T-cell (primary cell): ENCODE measurements at regions of chr1 and their contacts with region 1.

Region 1: GRCh38 chr1:235122348-235122747 is 6.3 kb downstream of the TOMM20 start:
- DNase-seq: no peak
- ATAC-seq: no peak
- H3K4me3 ChIP-seq: no peak overlapping the region
- H3K4me3 Mint-ChIP-seq: peak overlapping the region in 2 of 3 donors; percentile 56 to 58
- H3K27ac ChIP-seq: no peak overlapping the region
- H3K27ac Mint-ChIP-seq: peak overlapping the region in 1 of 2 donors; percentile 73
- H3K4me1 ChIP-seq: peaks cover 6 to 31% of the 10 kb centered on the region in 2 experiments
- H3K4me1 Mint-ChIP-seq: peaks cover 55 to 62% (median 61%) of the 10 kb centered on the region in 3 donors
- H3K27me3 ChIP-seq: no peaks in the 10 kb centered on the region
- H3K27me3 Mint-ChIP-seq: no peaks in the 10 kb centered on the region

Region 2: DNA sequence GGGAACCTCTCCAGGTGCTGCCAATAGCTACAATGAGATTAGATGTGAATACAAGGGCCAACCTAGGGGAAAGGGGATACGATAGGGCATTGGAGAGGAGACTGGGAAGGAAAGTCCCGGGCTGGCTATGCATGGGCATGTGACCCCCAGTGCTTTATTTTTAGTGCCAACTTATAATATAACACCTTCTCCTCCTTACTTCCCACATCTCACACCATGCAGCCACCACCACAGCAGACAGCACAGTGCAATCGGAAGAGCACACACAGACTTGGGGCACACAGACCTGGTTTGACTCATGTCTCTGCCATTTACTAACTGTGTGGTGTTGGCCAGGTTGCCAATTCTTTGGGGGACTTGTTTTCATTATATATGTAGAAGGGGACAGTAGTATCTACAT is 79.1 kb before region 1 on chr1:
- CTCF ChIA-PET with region 1: no interaction called
- POLR2A ChIA-PET with region 1: no interaction called
- DNase-seq: peak in 3 of 35 experiments; percentile 5 to 30 (median 19)
- ATAC-seq: peak in 1 of 4 experiments; percentile 29
- H3K4me3 ChIP-seq: no peak overlapping the region
- H3K4me3 Mint-ChIP-seq: no peak overlapping the region
- H3K27ac ChIP-seq: no peak overlapping the region
- H3K27ac Mint-ChIP-seq: no peak overlapping the region
- H3K4me1 ChIP-seq: peaks cover 0 to 17% of the 10 kb centered on the region in 2 experiments
- H3K4me1 Mint-ChIP-seq: peaks cover 6 to 33% (median 17%) of the 10 kb centered on the region in 3 donors
- H3K27me3 ChIP-seq: no peaks in the 10 kb centered on the region
- H3K27me3 Mint-ChIP-seq: no peaks in the 10 kb centered on the region

Region 3: DNA sequence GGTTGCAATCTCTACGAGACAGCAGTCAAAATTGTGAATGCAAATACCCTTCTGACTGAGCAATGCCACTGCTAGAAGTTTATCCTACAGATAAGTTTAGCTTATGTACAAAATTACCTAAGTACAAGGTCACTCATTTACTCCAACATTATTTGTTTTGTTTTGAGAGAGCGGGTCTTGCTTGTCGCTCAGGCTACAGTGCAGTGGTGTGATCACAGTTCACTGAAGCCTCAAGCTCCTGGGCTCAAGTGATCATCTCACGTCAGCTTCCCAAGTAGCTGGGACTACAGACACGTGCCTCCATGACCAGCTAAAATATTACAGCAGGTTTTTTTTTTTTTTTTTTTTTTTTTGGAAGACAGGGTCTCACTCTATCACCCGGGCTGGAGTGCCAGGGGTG is 23.3 kb after region 1 on chr1:
- CTCF ChIA-PET with region 1: no interaction called
- POLR2A ChIA-PET with region 1: interaction called, 3 to 14 read pairs
- DNase-seq: no peak
- ATAC-seq: no peak
- H3K4me3 ChIP-seq: no peak overlapping the region
- H3K4me3 Mint-ChIP-seq: no peak overlapping the region
- H3K27ac ChIP-seq: no peak overlapping the region
- H3K27ac Mint-ChIP-seq: peak overlapping the region in 1 of 2 donors; percentile 28
- H3K4me1 ChIP-seq: peaks cover 0 to under 1% of the 10 kb centered on the region in 2 experiments
- H3K4me1 Mint-ChIP-seq: peaks cover 6 to 15% (median 11%) of the 10 kb centered on the region in 3 donors
- H3K27me3 ChIP-seq: no peaks in the 10 kb centered on the region
- H3K27me3 Mint-ChIP-seq: no peaks in the 10 kb centered on the region

Region 4: GRCh38 chr1:236403905-236404696 is 1281.8 kb after region 1 on chr1:
- CTCF ChIA-PET with region 1: no interaction called
- POLR2A ChIA-PET with region 1: interaction called in 1 of 2 experiments, 10 read pairs
- DNase-seq: no peak
- ATAC-seq: no peak
- H3K4me3 ChIP-seq: no peak overlapping the region
- H3K4me3 Mint-ChIP-seq: no peak overlapping the region
- H3K27ac ChIP-seq: no peak overlapping the region
- H3K27ac Mint-ChIP-seq: no peak overlapping the region
- H3K4me1 ChIP-seq: peaks cover 0 to 4% of the 10 kb centered on the region in 2 experiments
- H3K4me1 Mint-ChIP-seq: peaks cover 0 to 9% (median 1%) of the 10 kb centered on the region in 3 donors
- H3K27me3 ChIP-seq: peaks cover 0 to 3% of the 10 kb centered on the region in 2 experiments
- H3K27me3 Mint-ChIP-seq: peaks cover 2 to 16% of the 10 kb centered on the region in 2 donors